PC-3 (cell line): ENCODE measurements at regions of chr4 and their contacts with region 1.

Region 1: GRCh38 chr4:106062452-106062875 is 167.2 kb downstream of the NPNT start:
- DNase-seq: peak; percentile 79
- ATAC-seq: peak; percentile 65
- H3K4me3 ChIP-seq: no peak overlapping the region
- H3K27ac ChIP-seq: 0 out of 2 replicates have a peak overlapping the region, but pooled peaks have one; percentile 13
- H3K4me1 ChIP-seq: peaks cover 29% of the 10 kb centered on the region
- H3K27me3 ChIP-seq: no peaks in the 10 kb centered on the region
- CTCF ChIP-seq: no peak

Region 2: DNA sequence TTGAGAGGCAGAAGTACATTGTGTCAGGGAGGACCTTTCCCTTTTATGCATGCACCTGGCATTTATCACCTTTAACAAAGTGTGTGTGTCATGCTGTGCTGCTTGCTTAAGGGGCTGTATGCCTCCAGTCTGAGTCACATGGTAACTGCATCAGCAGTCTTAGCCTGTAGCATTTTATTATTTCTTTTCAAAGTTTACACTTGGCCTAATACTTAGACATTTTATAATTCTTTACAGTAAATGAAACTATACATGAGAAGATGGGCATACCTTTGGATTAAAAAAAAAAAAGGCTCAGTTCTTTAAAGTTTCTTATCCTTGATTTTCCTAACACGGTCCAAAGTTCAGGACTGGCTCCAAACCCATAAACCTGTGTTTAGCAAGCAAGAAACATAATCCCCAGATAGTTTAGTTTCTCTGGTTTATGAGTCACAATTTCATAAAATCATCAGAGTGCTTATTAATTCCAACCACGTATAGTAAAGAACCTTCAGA is 152.6 kb before region 1 on chr4:
- CTCF ChIA-PET with region 1: no interaction called
- POLR2A ChIA-PET with region 1: no interaction called
- intact Hi-C with region 1: loop called (anchors 10 kb)
- DNase-seq: peak; percentile 87
- ATAC-seq: peak; percentile 99
- H3K4me3 ChIP-seq: peak overlapping the region; percentile 52; the same call in 1 of the 2 replicates
- H3K27ac ChIP-seq: peak overlapping the region; percentile 92
- H3K4me1 ChIP-seq: peaks cover 26% of the 10 kb centered on the region
- H3K27me3 ChIP-seq: no peaks in the 10 kb centered on the region
- CTCF ChIP-seq: no peak